ENCODE measurements at regions of chr2 and their contacts with region 1.

Region 1: GRCh38 chr2:48107326-48107925 is 201.1 kb upstream of the FBXO11 start:
- DNase-seq: no peak
- H3K4me3 Mint-ChIP-seq: no peak overlapping the region
- H3K27ac Mint-ChIP-seq: peak overlapping the region; percentile 3
- H3K4me1 Mint-ChIP-seq: peaks cover 29% of the 10 kb centered on the region
- H3K27me3 Mint-ChIP-seq: peaks cover 2% of the 10 kb centered on the region

Region 2: GRCh38 chr2:47336259-47337238 is 770.9 kb before region 1 on chr2:
- CTCF ChIA-PET with region 1: no interaction called
- intact Hi-C with region 1: loop called (anchors 1 kb)
- DNase-seq: no peak
- H3K4me3 Mint-ChIP-seq: no peak overlapping the region
- H3K27ac Mint-ChIP-seq: no peak overlapping the region
- H3K4me1 Mint-ChIP-seq: no peaks in the 10 kb centered on the region
- H3K27me3 Mint-ChIP-seq: peaks cover 3% of the 10 kb centered on the region

Region 3: DNA sequence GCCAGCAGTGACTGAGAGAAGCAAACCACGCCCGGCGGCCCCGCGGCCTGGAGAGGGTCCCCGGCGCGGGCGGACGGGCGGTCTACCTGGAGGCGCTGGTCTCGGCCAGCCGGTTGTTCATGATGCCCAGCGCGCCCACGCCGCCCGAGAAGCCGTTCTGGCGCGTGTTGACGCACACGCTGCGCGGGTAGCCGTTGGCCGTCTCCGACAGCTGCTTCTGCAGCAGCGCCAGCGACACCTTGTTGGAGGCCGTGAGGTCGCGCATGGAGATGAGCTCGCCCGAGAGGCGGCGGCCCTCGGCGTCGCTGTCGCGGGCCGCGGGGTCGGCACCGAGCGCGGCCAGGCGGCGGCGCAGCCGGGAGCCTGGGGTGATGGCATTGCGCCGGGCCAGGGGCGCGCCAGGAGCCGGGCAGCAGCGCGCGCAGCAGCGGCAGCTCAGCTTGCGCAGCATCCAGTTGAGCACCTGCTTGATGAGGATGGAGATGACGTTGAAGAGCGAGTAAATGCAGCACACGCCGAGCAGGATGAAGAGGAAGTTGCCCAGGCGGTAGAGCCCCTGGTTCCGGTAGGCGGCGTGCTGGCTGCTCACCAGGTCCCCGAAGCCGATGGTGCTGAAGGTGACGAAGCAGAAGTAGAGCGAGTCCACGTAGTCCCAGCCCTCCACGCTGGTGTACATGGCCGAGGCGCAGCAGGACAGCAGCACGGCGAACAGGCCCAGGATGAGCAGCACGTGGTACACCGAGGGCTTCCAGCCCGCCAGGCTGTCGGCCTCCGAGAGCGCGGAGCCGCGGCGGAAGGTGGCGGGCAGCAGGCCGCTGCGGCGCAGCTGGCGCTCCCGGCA is 586.4 kb before region 1 on chr2:
- CTCF ChIA-PET with region 1: no interaction called
- intact Hi-C with region 1: loop called (anchors 5 kb)
- DNase-seq: peak; percentile 83
- H3K4me3 Mint-ChIP-seq: peak overlapping the region; percentile 82
- H3K27ac Mint-ChIP-seq: peak overlapping the region; percentile 72
- H3K4me1 Mint-ChIP-seq: peaks cover 10% of the 10 kb centered on the region
- H3K27me3 Mint-ChIP-seq: no peaks in the 10 kb centered on the region

Region 4: DNA sequence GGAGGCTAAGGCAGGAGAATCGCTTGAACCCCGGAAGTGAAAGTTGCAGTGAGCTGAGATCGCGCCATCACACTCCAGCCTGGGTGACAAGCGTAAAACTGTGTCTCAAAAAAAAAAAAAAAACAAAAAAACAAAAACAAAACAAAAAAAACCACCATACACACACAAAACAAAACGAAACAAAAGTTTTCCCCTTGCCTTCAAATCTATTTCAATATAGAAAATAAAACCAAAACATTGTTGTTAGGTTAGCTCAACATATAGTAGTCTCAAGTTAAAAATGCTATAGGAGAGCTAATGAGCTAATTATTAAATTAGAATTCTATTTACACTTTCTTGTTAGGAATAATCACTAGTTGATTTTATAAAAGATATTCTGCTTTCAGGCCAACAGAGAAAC is 244.5 kb before region 1 on chr2:
- CTCF ChIA-PET with region 1: interaction called, 80 read pairs
- intact Hi-C with region 1: loop called (anchors 1 kb)
- DNase-seq: no peak
- H3K4me3 Mint-ChIP-seq: no peak overlapping the region
- H3K27ac Mint-ChIP-seq: no peak overlapping the region
- H3K4me1 Mint-ChIP-seq: peaks cover 59% of the 10 kb centered on the region
- H3K27me3 Mint-ChIP-seq: no peaks in the 10 kb centered on the region

Region 5: DNA sequence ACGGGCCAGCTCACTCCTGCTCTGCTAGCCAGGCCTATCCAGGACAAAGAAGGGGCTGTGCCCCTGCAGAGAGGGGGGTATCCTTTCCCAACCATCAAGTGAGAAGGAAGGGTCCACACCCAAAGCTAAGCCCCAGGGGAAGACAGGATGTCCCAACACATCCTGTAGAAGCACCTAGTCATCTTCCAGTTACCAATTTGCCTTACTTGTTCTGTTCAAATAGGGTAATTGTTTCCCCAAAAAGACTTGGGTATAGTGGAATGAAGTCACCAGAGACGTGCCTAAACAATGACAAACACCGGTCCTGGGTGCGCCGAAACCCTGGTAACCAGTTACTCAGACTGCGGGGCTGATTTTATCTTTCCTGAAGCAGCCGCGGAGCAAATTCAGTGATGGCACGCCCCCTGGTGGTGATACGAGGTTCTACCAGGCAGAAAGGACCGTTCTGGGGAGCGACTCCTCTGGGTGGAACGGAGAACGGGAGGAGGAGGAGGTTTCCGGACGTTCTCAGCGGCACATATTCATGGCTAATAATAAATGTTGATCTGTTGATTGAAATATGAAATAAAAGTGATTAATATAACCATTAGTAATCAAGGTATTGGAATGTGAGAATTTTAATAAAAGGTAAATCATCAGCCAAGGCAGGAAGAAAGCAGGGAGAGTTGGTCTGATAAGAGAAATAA is 313.2 kb after region 1 on chr2:
- CTCF ChIA-PET with region 1: interaction called, 13 read pairs
- intact Hi-C with region 1: no loop called
- DNase-seq: peak; percentile 97
- H3K4me3 Mint-ChIP-seq: no peak overlapping the region
- H3K27ac Mint-ChIP-seq: peak overlapping the region; percentile 7
- H3K4me1 Mint-ChIP-seq: peaks cover 21% of the 10 kb centered on the region
- H3K27me3 Mint-ChIP-seq: no peaks in the 10 kb centered on the region